Tibial artery (tissue), 4 donors: ENCODE measurements at regions of chr6 and their contacts with region 1.

Region 1: GRCh38 chr6:45421709-45422502 is 44.2 kb upstream of the SUPT3H start:
- DNase-seq: peak; percentile 42 to 80
- H3K4me3 ChIP-seq: peak overlapping the region; percentile 52 to 59
- H3K27ac ChIP-seq: peak overlapping the region; percentile 45 to 58
- H3K4me1 ChIP-seq: peaks cover 0 to 51% (median 34%) of the 10 kb centered on the region in 4 donors
- H3K27me3 ChIP-seq: peaks cover 0 to 69% of the 10 kb centered on the region in 2 donors
- CTCF ChIP-seq: no peak

Region 2: GRCh38 chr6:45377554-45378333 is 44.2 kb before region 1 on chr6 and contains the start of gene SUPT3H:
- intact Hi-C with region 1: loop called (anchors 5 kb)
- DNase-seq: peak; percentile 89 to 94
- H3K4me3 ChIP-seq: peak within 1 kb of the TSS; percentile 95 to 96
- H3K27ac ChIP-seq: peak within 1 kb of the TSS; percentile 98
- H3K4me1 ChIP-seq: peaks cover 0 to 20% (median 0%) of the 10 kb centered on the region in 4 donors
- H3K27me3 ChIP-seq: no peaks in the 10 kb centered on the region
- CTCF ChIP-seq: peak; percentile 13 to 18